Activated T-helper 1 cell treated with anti-CD3 and anti-CD28 coated beads, Interleukin-12 subunit alpha, Interleukin-12 subunit beta, Interleukin-2, Interleukin-4 antibody, amounts not matched to agents 30 ng/mL and 10 ng/mL and 1 ng/mL, durations not matched to agents 14 hours and 24 hours and 36 hours (primary cell): ENCODE measurements at regions of chr21 and their contacts with region 1.

Region 1: GRCh38 chr21:34967509-34968289 is 81.4 kb downstream of the RUNX1 start:
- DNase-seq: no peak
- H3K4me3 Mint-ChIP-seq: peak overlapping the region; percentile 80
- H3K27ac Mint-ChIP-seq: peak overlapping the region; percentile 94
- H3K4me1 Mint-ChIP-seq: peaks cover 91% of the 10 kb centered on the region
- H3K27me3 Mint-ChIP-seq: peaks cover 2% of the 10 kb centered on the region

Region 2: DNA sequence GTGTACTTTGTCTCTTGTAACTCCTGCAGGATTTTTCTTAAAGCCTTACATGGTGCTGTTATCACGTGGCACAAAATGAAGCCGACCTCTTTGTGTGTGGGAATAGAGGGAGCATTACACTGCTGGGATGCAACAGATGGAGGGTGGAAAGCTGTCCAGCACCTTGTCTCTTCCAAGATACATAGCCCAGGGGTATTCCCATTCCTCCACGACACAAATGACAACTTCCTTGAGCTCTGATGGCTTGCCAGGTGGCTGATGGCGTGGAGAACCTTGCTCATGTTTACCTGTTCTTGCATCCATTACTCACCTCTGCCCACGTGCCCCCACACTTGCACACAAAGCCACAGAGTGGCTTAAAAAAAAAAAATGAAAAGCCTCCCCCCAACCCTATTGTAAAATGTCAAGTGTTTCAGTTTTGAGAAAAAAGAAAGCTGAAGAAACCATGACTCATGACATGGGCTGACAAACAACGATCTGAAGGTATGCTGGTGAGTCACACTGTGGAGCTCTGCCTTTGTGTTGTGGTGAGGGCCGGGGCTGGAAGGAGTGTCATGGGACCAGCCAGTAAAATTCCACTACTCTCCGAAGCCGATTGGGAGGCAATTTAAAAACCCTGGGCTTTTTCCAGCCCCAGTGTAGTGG is 1020.1 kb before region 1 on chr21:
- intact Hi-C with region 1: loop called (anchors 10 kb)
- DNase-seq: peak; percentile 85
- H3K4me3 Mint-ChIP-seq: peak overlapping the region; percentile 65
- H3K27ac Mint-ChIP-seq: peak overlapping the region; percentile 97
- H3K4me1 Mint-ChIP-seq: peaks cover 77% of the 10 kb centered on the region
- H3K27me3 Mint-ChIP-seq: peaks cover 4% of the 10 kb centered on the region

Region 3: GRCh38 chr21:34881894-34882371 is 85.8 kb before region 1 on chr21:
- intact Hi-C with region 1: no loop called
- DNase-seq: no peak
- H3K4me3 Mint-ChIP-seq: peak overlapping the region; percentile 67
- H3K27ac Mint-ChIP-seq: peak overlapping the region; percentile 36
- H3K4me1 Mint-ChIP-seq: peaks cover 74% of the 10 kb centered on the region
- H3K27me3 Mint-ChIP-seq: no peaks in the 10 kb centered on the region

Region 4: DNA sequence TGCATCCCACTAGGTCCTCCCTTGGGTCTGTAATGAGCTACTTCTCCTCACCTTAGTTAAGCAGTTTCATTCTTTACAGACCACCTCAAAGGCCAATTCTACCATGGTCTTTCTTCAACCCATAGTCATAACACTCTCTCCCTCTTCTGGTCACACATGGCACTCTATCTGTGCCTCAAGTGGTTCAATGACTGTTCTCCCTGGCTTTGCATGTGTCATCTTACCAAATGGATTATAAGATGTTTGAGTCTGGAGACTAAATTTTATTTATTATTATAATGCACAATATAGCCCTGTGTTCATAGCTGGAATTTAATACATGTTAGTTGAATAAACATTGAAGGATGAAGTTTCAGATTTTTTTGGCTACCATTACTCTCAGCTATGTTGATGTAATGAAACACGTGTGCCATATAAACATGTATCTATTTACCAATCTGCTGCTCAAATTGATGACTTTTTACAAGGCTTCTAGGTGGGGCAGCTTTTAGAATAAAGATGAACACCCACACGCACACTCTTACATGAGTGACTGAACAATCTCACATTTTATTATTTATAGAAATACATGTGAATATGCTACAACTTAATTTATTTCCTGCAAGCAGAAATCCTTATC is 20.7 kb before region 1 on chr21:
- intact Hi-C with region 1: loop called (anchors 1 kb)
- DNase-seq: no peak
- H3K4me3 Mint-ChIP-seq: no peak overlapping the region
- H3K27ac Mint-ChIP-seq: peak overlapping the region; percentile 90
- H3K4me1 Mint-ChIP-seq: peaks cover 62% of the 10 kb centered on the region
- H3K27me3 Mint-ChIP-seq: no peaks in the 10 kb centered on the region

Region 5: GRCh38 chr21:35045542-35046262 is 78.0 kb after region 1 on chr21:
- intact Hi-C with region 1: loop called (anchors 1 kb)
- DNase-seq: peak; percentile 58
- H3K4me3 Mint-ChIP-seq: peak overlapping the region; percentile 93
- H3K27ac Mint-ChIP-seq: peak overlapping the region; percentile 98
- H3K4me1 Mint-ChIP-seq: peaks cover 95% of the 10 kb centered on the region
- H3K27me3 Mint-ChIP-seq: no peaks in the 10 kb centered on the region

Region 6: GRCh38 chr21:35138665-35139381 is 171.1 kb after region 1 on chr21:
- intact Hi-C with region 1: loop called (anchors 2 kb)
- DNase-seq: no peak
- H3K4me3 Mint-ChIP-seq: peak overlapping the region; percentile 62
- H3K27ac Mint-ChIP-seq: peak overlapping the region; percentile 93
- H3K4me1 Mint-ChIP-seq: peaks cover 27% of the 10 kb centered on the region
- H3K27me3 Mint-ChIP-seq: no peaks in the 10 kb centered on the region